ENCODE measurements at regions of chr9 and their contacts with region 1.

Region 1: DNA sequence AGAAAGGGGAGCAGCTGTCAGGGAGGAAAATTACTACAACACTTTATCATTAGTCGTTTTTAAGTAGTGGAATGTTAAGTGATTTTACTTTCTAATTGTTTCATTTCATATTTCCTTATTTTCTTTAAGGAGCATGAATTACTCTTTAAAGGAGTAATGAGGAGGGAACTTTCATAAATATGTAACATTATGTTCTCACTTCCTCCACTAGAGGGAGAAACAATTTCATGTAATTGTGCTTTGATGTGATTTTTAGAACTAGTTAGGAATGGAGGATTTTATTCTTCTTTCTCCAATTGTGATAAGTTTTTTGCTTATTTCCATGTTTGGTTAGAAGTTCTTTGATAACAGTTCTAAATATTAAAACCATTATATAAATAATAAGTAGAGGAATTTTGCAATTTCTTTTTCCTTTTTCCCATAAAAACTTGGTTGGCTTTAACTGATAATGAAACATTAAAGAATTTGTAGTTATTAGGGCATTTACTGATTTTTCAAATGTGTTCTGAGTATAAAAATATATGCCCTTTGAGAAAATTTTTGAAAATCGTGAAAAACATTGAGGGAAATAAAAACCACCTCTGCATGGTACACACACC is 25.6 kb downstream of the CEP78 start:
- DNase-seq: no peak
- H3K4me3 Mint-ChIP-seq: no peak overlapping the region
- H3K27ac Mint-ChIP-seq: no peak overlapping the region
- H3K4me1 Mint-ChIP-seq: no peaks in the 10 kb centered on the region
- H3K27me3 Mint-ChIP-seq: no peaks in the 10 kb centered on the region

Region 2: GRCh38 chr9:78369639-78370219 is 108.2 kb after region 1 on chr9:
- CTCF ChIA-PET with region 1: interaction called, 23 read pairs
- POLR2A ChIA-PET with region 1: no interaction called
- intact Hi-C with region 1: loop called (anchors 1 kb)
- DNase-seq: peak; percentile 63
- H3K4me3 Mint-ChIP-seq: no peak overlapping the region
- H3K27ac Mint-ChIP-seq: no peak overlapping the region
- H3K4me1 Mint-ChIP-seq: no peaks in the 10 kb centered on the region
- H3K27me3 Mint-ChIP-seq: peaks cover 27% of the 10 kb centered on the region